ENCODE measurements at regions of chr7 and their contacts with region 1.

Region 1: GRCh38 chr7:47818796-47819606 is 129.3 kb downstream of the PKD1L1 start:
- DNase-seq: peak; percentile 79 to 82
- H3K4me3 ChIP-seq: no peak overlapping the region
- H3K27ac ChIP-seq: peak overlapping the region; percentile 33 to 34
- H3K4me1 ChIP-seq: peaks cover 0 to 32% (median 6%) of the 10 kb centered on the region in 4 donors
- H3K27me3 ChIP-seq: no peaks in the 10 kb centered on the region
- CTCF ChIP-seq: peak; percentile 91 to 96

Region 2: GRCh38 chr7:46839651-46840050 is 979.4 kb before region 1 on chr7:
- intact Hi-C with region 1: loop called (anchors 10 kb)
- DNase-seq: no peak
- H3K4me3 ChIP-seq: no peak overlapping the region
- H3K27ac ChIP-seq: peak overlapping the region; percentile 59 to 66
- H3K4me1 ChIP-seq: peaks cover 0 to 51% (median 7%) of the 10 kb centered on the region in 4 donors
- H3K27me3 ChIP-seq: no peaks in the 10 kb centered on the region
- CTCF ChIP-seq: no peak

Region 3: GRCh38 chr7:47435889-47436312 is 383.1 kb before region 1 on chr7:
- intact Hi-C with region 1: loop called (anchors 5 kb)
- DNase-seq: peak; percentile 77 to 85
- H3K4me3 ChIP-seq: no peak overlapping the region
- H3K27ac ChIP-seq: no peak overlapping the region
- H3K4me1 ChIP-seq: peaks cover 0 to 7% (median 0%) of the 10 kb centered on the region in 4 donors
- H3K27me3 ChIP-seq: no peaks in the 10 kb centered on the region
- CTCF ChIP-seq: peak; percentile 77 to 78

Region 4: DNA sequence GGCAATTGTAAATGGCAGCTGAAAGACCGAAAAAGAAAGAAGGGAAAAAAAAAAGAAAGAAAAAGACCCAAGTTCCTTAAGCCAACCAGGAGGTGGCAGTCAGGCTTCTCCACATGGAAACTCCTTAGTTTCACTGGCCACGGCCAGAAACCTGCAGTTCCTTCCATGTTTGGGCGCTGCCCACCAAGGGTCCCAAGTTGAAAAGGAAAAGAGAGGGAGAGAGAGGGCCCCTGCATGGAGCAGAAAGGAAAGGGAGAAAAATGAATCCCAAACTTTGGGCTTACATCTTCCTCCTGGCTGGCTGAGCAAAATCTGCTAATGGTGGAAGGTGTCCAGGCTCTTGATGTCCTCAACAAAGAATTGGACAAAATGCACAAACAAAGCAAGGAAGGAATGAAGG is 320.5 kb after region 1 on chr7:
- intact Hi-C with region 1: no loop called
- DNase-seq: no peak
- H3K4me3 ChIP-seq: no peak overlapping the region
- H3K27ac ChIP-seq: no peak overlapping the region
- H3K4me1 ChIP-seq: no peaks in the 10 kb centered on the region
- H3K27me3 ChIP-seq: no peaks in the 10 kb centered on the region
- CTCF ChIP-seq: no peak

Measured in tibial artery (tissue), 4 donors.